Right lobe of liver (tissue), 6 donors: ENCODE measurements at regions of chr9 and their contacts with region 1.

Region 1: GRCh38 chr9:96566498-96567207 is 53.0 kb downstream of the CDC14B start:
- DNase-seq: peak; percentile 85 to 94 (median 93)
- ATAC-seq: peak; percentile 91 to 94 (median 92)
- H3K4me3 ChIP-seq: peak overlapping the region; percentile 68 to 71 (median 68)
- H3K27ac ChIP-seq: peak overlapping the region; percentile 85 to 94 (median 93)
- H3K4me1 ChIP-seq: no peaks in the 10 kb centered on the region
- H3K27me3 ChIP-seq: no peaks in the 10 kb centered on the region
- CTCF ChIP-seq: peak; percentile 58 to 82 (median 78)
- POLR2A ChIP-seq: no peak

Region 2: GRCh38 chr9:96619491-96620154 is 53.0 kb after region 1 on chr9 and contains the start of gene CDC14B:
- intact Hi-C with region 1: loop called in 1 of 2 experiments (anchors 5 kb)
- DNase-seq: peak; percentile 87 to 93 (median 88)
- ATAC-seq: peak; percentile 74 to 86 (median 82)
- H3K4me3 ChIP-seq: peak within 1 kb of the TSS; percentile 57 to 76 (median 60)
- H3K27ac ChIP-seq: peak within 1 kb of the TSS; percentile 85 to 98 (median 94)
- H3K4me1 ChIP-seq: peaks cover 0 to 6% (median 0%) of the 10 kb centered on the region in 4 donors
- H3K27me3 ChIP-seq: no peaks in the 10 kb centered on the region
- CTCF ChIP-seq: peak in 2 of 4 donors; percentile 38 to 49
- POLR2A ChIP-seq: no peak
- total RNA-seq, gene CDC14B: 13.7 to 38.0 (median 25.7) TPM

Region 3: DNA sequence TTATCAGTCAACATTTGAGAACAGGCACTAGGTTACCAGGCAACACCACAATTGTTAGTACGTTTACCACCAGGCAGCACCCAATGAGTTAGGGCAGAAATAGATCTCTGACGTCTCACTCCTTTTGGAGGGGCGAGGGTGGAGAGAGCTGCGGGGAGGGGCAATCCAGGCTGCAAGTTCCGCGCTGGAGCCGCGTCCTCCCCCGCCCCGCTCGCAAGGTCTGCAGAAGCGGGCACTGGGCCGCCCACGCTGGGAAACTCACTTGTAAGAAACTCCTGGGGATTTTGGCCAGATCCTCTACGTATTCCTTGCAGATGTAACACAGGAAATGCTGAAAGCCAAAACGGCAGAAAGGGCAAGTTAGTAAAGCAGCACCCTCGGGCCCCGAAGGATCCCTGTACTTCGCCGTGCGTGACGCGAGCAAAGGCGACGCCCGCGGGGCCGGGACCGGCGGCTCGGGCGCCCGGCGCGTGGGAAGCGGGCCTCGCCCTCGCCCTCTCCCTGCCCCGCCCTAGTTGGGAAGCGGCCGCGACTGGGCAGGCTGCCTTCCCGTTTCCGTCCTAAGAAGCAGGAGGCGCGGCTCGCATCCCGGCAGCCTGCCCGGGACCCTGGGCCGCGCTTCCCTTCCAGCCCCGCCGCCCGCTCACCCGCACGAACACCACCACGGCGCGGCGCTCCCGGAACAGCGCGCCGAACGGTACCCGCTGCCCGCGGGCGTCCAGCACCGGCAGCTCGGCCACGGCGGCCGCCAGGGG is 88.0 kb after region 1 on chr9:
- intact Hi-C with region 1: no loop called
- DNase-seq: peak; percentile 81 to 85 (median 81)
- ATAC-seq: peak; percentile 77 to 87 (median 84)
- H3K4me3 ChIP-seq: peak overlapping the region; percentile 55 to 66 (median 63)
- H3K27ac ChIP-seq: peak overlapping the region; percentile 61 to 88 (median 87)
- H3K4me1 ChIP-seq: peaks cover 0 to 5% (median 2%) of the 10 kb centered on the region in 4 donors
- H3K27me3 ChIP-seq: no peaks in the 10 kb centered on the region
- CTCF ChIP-seq: peak in 1 of 4 donors; percentile 30
- POLR2A ChIP-seq: peak; percentile 85